Caco-2 (cell line): ENCODE measurements at regions of chr16 and their contacts with region 1.

Region 1: GRCh38 chr16:28863929-28864793 is 518 bp downstream of the SH2B1 start:
- DNase-seq: no peak
- H3K4me3 ChIP-seq: peak overlapping the region; percentile 48
- H3K4me3 Mint-ChIP-seq: peak overlapping the region; percentile 94
- H3K27ac Mint-ChIP-seq: peak overlapping the region; percentile 96
- H3K4me1 ChIP-seq: peaks cover 12% of the 10 kb centered on the region
- H3K4me1 Mint-ChIP-seq: peaks cover 13% of the 10 kb centered on the region
- H3K27me3 ChIP-seq: no peaks in the 10 kb centered on the region
- H3K27me3 Mint-ChIP-seq: no peaks in the 10 kb centered on the region
- CTCF ChIP-seq: no peak

Region 2: GRCh38 chr16:28587386-28587785 is 276.8 kb before region 1 on chr16:
- CTCF ChIA-PET with region 1: no interaction called
- POLR2A ChIA-PET with region 1: no interaction called
- intact Hi-C with region 1: no loop called
- DNase-seq: no peak
- H3K4me3 ChIP-seq: no peak overlapping the region
- H3K4me3 Mint-ChIP-seq: no peak overlapping the region
- H3K27ac Mint-ChIP-seq: no peak overlapping the region
- H3K4me1 ChIP-seq: no peaks in the 10 kb centered on the region
- H3K4me1 Mint-ChIP-seq: no peaks in the 10 kb centered on the region
- H3K27me3 ChIP-seq: no peaks in the 10 kb centered on the region
- H3K27me3 Mint-ChIP-seq: no peaks in the 10 kb centered on the region
- CTCF ChIP-seq: no peak

Region 3: DNA sequence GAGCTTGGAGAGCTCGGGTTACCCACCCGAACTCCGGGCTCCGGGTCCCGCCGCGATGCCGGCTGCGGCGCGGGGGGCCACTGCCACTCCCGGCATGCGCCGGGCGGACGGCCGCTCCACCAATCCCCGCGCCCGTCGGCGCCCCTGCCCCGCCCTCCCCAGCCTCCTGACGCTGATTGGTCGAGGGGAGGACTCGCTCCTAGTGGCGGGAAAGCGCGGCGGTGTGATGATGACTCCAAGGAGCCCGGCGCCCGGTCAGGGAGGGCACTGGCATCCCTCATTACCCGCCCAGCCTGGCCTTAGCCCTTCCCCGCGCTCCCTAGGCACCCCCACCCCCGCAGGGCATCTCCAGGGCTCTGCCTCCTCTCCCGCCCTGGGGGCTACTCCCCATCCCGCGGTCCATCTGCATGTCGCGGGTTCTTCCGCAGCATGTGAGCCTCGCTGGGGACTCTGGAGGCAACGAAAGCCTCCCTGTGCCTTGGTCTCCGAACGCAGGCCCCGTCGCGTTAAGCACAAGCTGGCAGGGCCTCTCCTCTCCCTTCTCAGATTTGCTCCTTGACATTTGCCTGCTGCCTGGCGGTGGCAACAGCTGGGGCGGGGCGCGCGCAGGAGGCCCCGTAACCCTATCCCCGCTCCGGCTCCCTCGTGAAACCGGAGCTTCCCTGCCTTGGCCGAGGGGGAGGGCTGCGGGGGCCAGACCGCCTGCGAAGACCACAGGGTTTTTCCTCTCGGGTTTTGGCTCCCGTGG is 15.9 kb after region 1 on chr16:
- CTCF ChIA-PET with region 1: interaction called, 3 read pairs
- POLR2A ChIA-PET with region 1: interaction called, 6 read pairs
- intact Hi-C with region 1: loop called (anchors 1 kb)
- DNase-seq: peak; percentile 86 to 90
- H3K4me3 ChIP-seq: peak overlapping the region; percentile 63
- H3K4me3 Mint-ChIP-seq: peak overlapping the region; percentile 89
- H3K27ac Mint-ChIP-seq: peak overlapping the region; percentile 80
- H3K4me1 ChIP-seq: peaks cover 5% of the 10 kb centered on the region; the same call in 1 of the 2 replicates
- H3K4me1 Mint-ChIP-seq: no peaks in the 10 kb centered on the region
- H3K27me3 ChIP-seq: no peaks in the 10 kb centered on the region
- H3K27me3 Mint-ChIP-seq: no peaks in the 10 kb centered on the region
- CTCF ChIP-seq: no peak

Region 4: GRCh38 chr16:28897826-28898225 is 33.7 kb after region 1 on chr16:
- CTCF ChIA-PET with region 1: no interaction called
- POLR2A ChIA-PET with region 1: no interaction called
- intact Hi-C with region 1: no loop called
- DNase-seq: no peak
- H3K4me3 ChIP-seq: no peak overlapping the region
- H3K4me3 Mint-ChIP-seq: no peak overlapping the region
- H3K27ac Mint-ChIP-seq: no peak overlapping the region
- H3K4me1 ChIP-seq: no peaks in the 10 kb centered on the region
- H3K4me1 Mint-ChIP-seq: no peaks in the 10 kb centered on the region
- H3K27me3 ChIP-seq: no peaks in the 10 kb centered on the region
- H3K27me3 Mint-ChIP-seq: no peaks in the 10 kb centered on the region
- CTCF ChIP-seq: no peak